ENCODE measurements at regions of chr2 and their contacts with region 1.

Region 1: DNA sequence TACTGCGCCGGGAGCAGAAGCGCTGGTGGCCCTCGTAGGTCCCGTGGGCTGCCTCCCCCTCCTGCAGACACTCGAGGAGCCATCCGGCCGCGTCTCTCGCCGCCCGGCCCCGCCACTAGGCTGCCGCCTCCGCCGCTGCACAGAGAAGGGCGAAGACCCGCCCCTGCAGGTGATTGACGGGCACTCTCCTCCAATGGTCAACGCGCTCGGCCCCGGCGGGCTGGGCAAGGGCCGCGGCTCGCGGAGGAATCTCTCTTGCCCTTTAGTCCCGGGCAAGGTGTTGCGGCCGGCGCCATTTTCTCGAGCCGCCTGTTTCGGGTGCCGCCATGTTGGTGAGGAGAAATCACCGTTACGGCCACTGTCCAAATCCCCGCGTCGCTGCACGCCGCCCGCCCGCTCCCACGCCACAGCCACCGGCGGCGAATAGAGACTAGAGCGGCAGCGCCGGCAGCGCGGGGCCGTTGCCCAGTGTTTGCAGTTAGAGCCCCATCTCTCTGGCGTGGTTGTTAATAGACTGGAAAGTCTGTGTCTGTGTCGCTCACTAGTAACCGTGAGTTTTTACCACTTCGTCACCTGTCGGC is at the start of gene ZC3H6:
- DNase-seq: peak; percentile 98
- H3K4me3 ChIP-seq: peak within 1 kb of the TSS; percentile 97
- H3K27ac ChIP-seq: peak within 1 kb of the TSS; percentile 97
- H3K4me1 ChIP-seq: peaks cover 12% of the 10 kb centered on the region
- CTCF ChIP-seq: no peak
- total RNA-seq, gene ZC3H6: 4.3 and 5.4 TPM in 2 replicates

Region 2: DNA sequence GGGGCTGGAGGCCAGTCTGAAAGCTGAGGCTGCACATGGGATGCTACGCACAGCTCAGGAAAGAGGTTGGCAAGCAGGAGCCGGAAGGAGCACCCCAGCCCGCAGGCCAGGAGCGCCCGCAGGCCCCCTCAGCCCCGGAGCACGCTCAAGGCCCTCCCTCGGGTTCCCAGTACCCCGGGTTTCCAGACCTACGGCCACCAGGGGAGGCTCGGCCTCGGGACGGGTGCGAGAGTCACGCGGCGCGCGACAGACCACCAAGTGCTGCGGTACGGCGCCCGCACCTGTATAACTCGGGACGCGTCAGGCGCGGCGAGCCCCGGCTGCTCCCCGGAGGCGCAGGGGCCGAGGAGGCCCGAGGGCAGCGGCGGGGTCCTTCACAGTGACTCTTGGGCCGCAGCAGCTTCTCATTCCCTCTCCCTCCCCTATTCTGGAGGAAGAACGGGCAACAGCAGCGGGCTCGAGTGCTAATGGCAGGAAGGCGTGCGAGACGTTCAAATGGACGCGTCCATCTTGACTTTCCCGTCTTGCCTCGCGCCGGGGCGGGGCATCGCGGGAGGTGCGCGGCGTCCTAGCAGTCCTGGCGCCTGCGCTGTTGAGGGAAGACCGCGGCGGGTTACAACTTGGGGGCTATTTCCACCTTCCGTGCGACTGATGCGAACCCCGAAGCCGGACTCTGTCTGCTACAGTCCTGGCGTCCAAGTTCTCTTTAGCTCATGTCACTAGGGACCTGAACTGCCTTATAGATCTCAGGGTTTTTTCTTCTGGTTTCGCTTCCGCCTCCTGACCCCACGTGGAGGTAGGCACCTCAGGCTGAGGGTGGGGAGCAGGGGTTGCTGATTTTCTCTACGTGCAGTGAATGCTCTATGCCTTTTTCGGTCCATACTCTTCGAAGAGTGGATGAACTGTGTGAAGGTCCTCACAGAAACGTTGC is 391.5 kb before region 1 on chr2 and contains the start of gene ANAPC1:
- CTCF ChIA-PET with region 1: no interaction called
- POLR2A ChIA-PET with region 1: no interaction called
- intact Hi-C with region 1: loop called (anchors 5 kb)
- DNase-seq: peak; percentile 92
- H3K4me3 ChIP-seq: peak within 1 kb of the TSS; percentile 88
- H3K27ac ChIP-seq: peak within 1 kb of the TSS; percentile 87
- H3K4me1 ChIP-seq: peaks cover 14% of the 10 kb centered on the region
- CTCF ChIP-seq: no peak
- total RNA-seq, gene ANAPC1: 103 and 151 TPM in 2 replicates

Region 3: GRCh38 chr2:112156152-112156986 is 119.0 kb before region 1 on chr2:
- CTCF ChIA-PET with region 1: no interaction called
- POLR2A ChIA-PET with region 1: no interaction called
- intact Hi-C with region 1: loop called (anchors 1 kb)
- DNase-seq: no peak
- H3K4me3 ChIP-seq: no peak overlapping the region
- H3K27ac ChIP-seq: no peak overlapping the region
- H3K4me1 ChIP-seq: peaks cover 38% of the 10 kb centered on the region
- CTCF ChIP-seq: no peak

Region 4: GRCh38 chr2:112254466-112255239 is 20.7 kb before region 1 on chr2 and contains the start of gene ZC3H8:
- CTCF ChIA-PET with region 1: no interaction called
- POLR2A ChIA-PET with region 1: interaction called, 4 read pairs
- intact Hi-C with region 1: loop called (anchors 1 kb)
- DNase-seq: peak; percentile 93
- H3K4me3 ChIP-seq: peak within 1 kb of the TSS; percentile 83
- H3K27ac ChIP-seq: peak within 1 kb of the TSS; percentile 70
- H3K4me1 ChIP-seq: peaks cover 21% of the 10 kb centered on the region
- CTCF ChIP-seq: peak; percentile 45
- total RNA-seq, gene ZC3H8: 12.3 and 15.0 TPM in 2 replicates

Region 5: GRCh38 chr2:112259509-112260294 is 15.7 kb before region 1 on chr2:
- CTCF ChIA-PET with region 1: no interaction called
- POLR2A ChIA-PET with region 1: interaction called, 7 read pairs
- intact Hi-C with region 1: loop called (anchors 1 kb)
- DNase-seq: peak; percentile 79
- H3K4me3 ChIP-seq: no peak overlapping the region
- H3K27ac ChIP-seq: no peak overlapping the region
- H3K4me1 ChIP-seq: peaks cover 10% of the 10 kb centered on the region
- CTCF ChIP-seq: peak; percentile 98

Region 6: DNA sequence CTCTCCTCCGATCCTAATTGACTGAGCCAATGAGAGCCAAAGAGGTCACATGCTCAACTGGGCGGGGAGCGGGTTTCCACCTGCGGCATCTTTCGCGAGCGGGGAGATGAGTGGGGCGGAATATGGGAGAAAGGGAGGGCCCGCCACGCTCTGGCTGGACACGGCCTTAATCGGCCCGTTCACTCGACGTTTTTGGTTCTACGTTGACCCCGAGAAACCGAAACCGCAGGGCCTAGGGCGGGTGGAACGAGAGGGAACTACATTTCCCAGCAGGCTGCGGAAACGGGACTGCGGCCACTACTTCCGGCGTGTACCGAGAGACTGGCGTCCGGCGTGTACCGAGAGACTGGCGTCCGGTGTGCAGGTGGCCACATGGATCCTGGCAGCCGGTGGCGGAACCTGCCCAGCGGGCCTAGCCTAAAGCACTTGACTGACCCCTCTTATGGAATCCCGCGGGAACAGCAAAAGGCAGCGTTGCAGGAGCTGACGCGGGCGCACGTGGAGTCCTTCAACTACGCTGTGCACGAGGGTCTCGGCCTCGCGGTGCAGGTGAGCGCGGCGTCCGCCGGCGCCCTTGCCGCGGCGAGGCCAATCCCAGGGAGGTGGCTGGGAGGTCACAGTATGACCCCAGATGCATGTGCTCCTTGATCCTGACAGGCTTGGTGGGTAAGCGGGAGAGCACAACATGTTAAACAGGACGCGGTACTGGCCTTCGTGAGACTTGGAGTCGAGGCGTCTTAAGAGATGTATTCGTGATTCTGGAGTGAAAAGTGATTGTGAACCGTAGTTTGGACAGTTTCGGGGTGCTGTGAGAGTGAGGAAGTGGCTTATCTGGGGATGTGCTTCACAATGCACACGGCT is 267.0 kb after region 1 on chr2 and contains the start of gene POLR1B:
- CTCF ChIA-PET with region 1: no interaction called
- POLR2A ChIA-PET with region 1: no interaction called
- intact Hi-C with region 1: loop called (anchors 5 kb)
- DNase-seq: peak; percentile 85
- H3K4me3 ChIP-seq: peak within 1 kb of the TSS; percentile 91
- H3K27ac ChIP-seq: peak within 1 kb of the TSS; percentile 83
- H3K4me1 ChIP-seq: peaks cover 23% of the 10 kb centered on the region
- CTCF ChIP-seq: no peak
- total RNA-seq, gene POLR1B: 28.0 and 30.5 TPM in 2 replicates

Measured in OCI-LY7 (cell line).